G401 (cell line): ENCODE measurements at regions of chr5 and their contacts with region 1.

Region 1: DNA sequence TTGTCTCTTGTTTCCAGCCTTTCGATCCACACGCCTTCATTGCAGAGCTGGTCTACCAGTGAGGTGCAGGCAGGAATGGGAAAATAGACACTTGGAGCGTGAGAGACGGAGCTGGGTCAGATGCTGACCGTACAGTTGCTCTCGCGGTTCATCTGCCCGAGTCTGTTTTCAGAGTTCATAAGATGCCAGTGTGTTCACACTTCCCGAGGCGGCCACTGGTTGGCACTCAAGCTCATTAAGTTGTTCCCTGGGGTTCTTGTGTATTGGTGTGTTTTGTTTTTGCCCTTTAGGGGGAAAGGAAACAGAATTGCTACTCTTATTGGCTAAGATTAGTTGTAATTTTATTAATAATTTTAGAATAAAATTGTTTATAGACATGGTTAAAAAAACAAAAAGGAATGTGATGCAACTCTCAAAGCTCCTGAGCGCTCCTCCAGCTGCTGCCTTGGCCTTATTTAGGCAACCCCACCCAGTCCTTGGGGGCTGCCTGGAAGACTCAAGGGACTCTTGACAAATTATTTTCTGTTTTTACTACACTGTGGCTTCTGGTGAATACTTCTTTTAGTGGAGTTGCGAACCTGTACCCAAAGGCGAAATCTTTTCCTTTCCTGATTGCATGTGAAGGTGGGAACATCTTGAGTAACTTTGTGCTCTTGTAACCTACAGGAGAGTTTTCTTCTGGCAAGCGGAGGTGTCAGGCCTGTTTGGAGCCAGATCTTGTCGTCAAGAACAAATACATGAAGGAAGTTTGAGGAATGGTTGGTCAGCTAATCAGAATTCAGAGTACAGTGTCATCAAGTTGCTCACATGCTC is 146.1 kb downstream of the MAST4 start:
- DNase-seq: no peak

Region 2: GRCh38 chr5:66306105-66306843 is 436.0 kb before region 1 on chr5:
- in situ Hi-C with region 1: loop called (anchors 25 kb)
- DNase-seq: peak; percentile 66

Region 3: DNA sequence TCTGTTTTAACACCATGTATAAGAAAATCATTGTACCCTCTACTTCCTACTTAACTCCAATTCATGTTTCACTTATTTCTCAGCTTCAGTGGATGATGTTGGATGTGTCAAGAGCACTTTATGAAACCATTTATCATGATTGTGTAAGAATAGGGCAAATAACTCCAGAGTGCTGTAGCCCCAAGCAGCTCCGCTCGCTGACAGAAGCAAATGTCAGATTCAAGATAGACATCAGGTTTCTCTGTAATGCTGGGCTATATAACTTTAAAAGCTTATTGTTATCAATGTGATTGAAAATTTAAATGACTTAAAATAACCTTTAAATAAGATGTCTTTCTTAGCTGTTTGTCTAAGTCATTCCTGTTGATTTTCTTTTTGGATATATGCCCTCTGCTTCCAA is 95.7 kb before region 1 on chr5:
- in situ Hi-C with region 1: no loop called
- DNase-seq: no peak